ENCODE measurements at regions of chr15 and their contacts with region 1.

Region 1: DNA sequence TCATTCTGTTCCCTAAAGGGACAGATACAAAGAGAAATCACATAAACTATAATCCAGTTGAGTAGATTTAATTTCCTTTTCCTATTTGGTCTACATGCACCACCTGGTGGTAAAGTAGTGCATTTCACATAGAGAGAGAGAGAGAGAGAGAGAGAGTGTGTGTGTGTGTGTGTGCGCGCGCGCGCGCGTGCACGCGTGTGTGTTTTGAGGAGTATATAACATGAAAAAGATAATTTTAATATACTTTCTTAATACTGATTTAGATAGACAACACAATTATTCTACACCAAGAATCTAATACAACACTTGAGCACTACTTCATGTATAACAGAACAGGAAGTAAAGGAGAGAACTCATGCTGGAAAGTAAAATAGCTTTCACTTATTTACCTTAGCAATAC is 1.1 kb upstream of the FGF7 start:
- DNase-seq: peak; percentile 32 to 40
- H3K4me3 ChIP-seq: peak overlapping the region in 1 of 3 donors; percentile 14
- H3K27ac ChIP-seq: peak overlapping the region; percentile 52 to 61 (median 59)
- H3K4me1 ChIP-seq: peaks cover 0 to 6% of the 10 kb centered on the region in 2 donors
- H3K27me3 ChIP-seq: no peaks in the 10 kb centered on the region
- CTCF ChIP-seq: peak; percentile 61 to 100 (median 82)
- POLR2A ChIP-seq: no peak

Region 2: GRCh38 chr15:48861813-48862431 is 560.1 kb before region 1 on chr15:
- intact Hi-C with region 1: loop called (anchors 10 kb)
- DNase-seq: peak in 1 of 2 donors; percentile 9
- H3K4me3 ChIP-seq: no peak overlapping the region
- H3K27ac ChIP-seq: no peak overlapping the region
- H3K4me1 ChIP-seq: no peaks in the 10 kb centered on the region
- H3K27me3 ChIP-seq: no peaks in the 10 kb centered on the region
- CTCF ChIP-seq: peak; percentile 56 to 96 (median 83)
- POLR2A ChIP-seq: no peak

Region 3: DNA sequence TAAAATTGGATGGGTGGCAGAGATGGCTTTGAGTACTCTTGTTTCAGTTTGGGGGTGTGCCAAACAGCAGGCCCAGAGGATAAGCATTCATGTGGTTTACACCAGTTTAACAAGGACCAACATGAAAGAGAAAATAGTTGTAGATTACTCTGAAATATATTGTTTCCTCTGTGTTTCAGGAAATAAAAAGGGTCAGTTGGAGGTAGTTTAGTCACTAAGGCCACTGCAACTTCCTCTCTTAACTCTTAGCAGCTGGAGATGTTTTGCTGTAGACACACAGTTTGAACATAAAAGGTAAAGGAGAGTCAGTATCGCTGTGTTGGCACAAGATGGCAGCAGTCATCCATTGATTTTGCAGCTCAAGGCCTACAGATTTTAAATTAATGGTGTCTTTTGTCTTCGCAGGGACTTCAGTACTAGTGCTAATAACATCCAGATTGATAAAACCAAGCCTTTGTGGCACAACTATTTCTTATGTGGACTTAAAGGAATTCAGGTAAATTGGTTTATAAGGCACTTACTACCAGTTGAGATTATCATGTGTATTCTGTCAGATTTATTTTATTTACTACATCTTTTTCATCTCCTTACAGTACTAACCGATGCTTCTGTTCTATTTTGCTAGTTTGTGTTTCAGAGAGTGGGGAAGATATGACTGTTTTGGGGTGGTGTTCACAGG is 186.4 kb before region 1 on chr15:
- intact Hi-C with region 1: loop called (anchors 10 kb)
- DNase-seq: peak; percentile 49 to 62
- H3K4me3 ChIP-seq: no peak overlapping the region
- H3K27ac ChIP-seq: no peak overlapping the region
- H3K4me1 ChIP-seq: peaks cover 0 to 11% of the 10 kb centered on the region in 2 donors
- H3K27me3 ChIP-seq: no peaks in the 10 kb centered on the region
- CTCF ChIP-seq: peak; percentile 18 to 91 (median 77)
- POLR2A ChIP-seq: no peak

Measured in thyroid gland (tissue), 4 donors.